ENCODE measurements at regions of chr2 and their contacts with region 1.

Region 1: DNA sequence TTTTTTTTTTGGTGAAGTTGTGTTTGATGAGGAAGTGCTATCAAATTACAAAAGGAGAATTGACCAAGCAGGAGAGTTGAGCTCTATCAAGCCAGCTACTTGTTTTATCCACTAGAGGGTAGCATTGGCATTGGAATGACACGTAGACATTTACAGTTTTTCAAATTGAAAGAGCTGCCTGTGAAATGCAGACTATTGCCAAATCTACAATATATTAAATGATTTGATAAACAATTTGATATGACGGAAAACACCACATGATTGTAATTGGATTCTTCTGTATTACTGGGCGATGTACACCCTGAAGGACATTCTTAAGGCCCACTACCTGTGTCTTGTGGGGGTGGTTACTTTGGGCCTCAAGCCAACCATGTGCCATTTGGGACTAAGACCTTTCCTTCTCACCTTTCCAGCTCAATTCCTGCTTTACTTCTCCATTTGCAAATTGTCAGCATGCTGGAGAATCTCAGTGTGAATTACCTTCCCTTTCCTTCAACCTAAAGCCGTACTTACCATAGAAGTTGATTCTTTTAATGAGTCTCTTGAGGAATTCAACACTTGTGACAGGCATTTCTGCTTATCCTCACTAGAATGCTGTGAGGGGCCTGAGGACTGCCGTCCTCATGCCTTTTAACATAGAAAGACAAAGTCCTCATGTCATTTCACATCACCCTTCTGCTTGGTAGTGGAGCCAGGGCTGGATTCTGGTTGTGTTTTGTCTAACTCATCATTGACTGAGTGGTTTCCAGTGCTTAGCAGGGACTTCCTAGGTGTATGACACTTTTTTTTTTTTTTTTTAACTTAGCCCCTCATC is 134.8 kb upstream of the THUMPD2 start:
- DNase-seq: peak in 1 of 2 donors; percentile 89
- H3K4me3 ChIP-seq: no peak overlapping the region
- H3K27ac ChIP-seq: no peak overlapping the region
- H3K4me1 ChIP-seq: peaks cover 0 to 7% (median 2%) of the 10 kb centered on the region in 4 donors
- H3K27me3 ChIP-seq: no peaks in the 10 kb centered on the region
- CTCF ChIP-seq: peak in 5 of 7 experiments; percentile 27 to 76 (median 63)
- EP300 ChIP-seq: no peak
- POLR2A ChIP-seq: no peak

Region 2: GRCh38 chr2:39455826-39456225 is 458.0 kb before region 1 on chr2:
- intact Hi-C with region 1: no loop called
- DNase-seq: no peak
- H3K4me3 ChIP-seq: no peak overlapping the region
- H3K27ac ChIP-seq: no peak overlapping the region
- H3K4me1 ChIP-seq: no peaks in the 10 kb centered on the region
- H3K27me3 ChIP-seq: no peaks in the 10 kb centered on the region
- CTCF ChIP-seq: no peak
- EP300 ChIP-seq: no peak
- POLR2A ChIP-seq: no peak

Region 3: DNA sequence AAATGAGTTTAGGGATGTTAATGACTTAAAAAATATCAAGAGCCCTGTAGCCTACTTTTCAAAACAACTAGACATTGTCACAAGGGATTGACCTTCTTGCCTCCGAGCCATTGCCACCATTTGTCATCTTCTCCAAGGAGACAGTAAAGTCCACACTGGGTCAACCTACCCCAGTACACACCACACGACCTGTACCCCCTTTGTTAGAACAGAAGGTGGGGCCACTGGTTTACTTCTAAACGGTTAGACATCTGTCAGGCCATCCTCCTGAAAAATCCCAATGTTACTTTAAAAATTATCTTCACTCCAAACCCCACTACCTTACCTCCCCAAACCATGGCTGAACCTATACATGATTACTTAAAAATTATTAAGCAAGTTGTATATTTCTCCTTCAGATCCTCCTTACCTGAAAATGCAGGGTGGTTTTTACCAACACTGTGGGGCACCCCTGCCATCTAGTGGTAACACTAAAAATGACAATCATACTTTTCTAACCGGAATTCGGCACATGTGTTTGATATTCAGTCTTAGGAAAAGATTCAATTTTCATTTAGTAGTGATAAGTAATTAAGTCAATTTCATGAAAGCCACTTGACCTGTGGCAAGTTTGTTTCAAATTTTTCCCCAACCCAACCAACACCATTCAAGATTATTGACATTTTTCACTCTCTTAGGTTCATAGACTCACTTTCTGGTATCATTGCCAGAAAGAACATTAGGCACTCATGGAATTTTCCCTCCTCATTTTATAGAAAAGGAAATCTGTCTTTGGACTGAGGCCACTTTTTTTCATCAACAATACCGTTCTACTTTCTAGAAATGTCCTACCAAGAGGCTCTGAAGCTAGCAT is 1868.7 kb after region 1 on chr2:
- intact Hi-C with region 1: loop called (anchors 5 kb)
- DNase-seq: peak in 1 of 2 donors; percentile 73
- H3K4me3 ChIP-seq: no peak overlapping the region
- H3K27ac ChIP-seq: no peak overlapping the region
- H3K4me1 ChIP-seq: peaks cover 0 to 5% (median 2%) of the 10 kb centered on the region in 4 donors
- H3K27me3 ChIP-seq: no peaks in the 10 kb centered on the region
- CTCF ChIP-seq: peak in 5 of 7 experiments; percentile 59 to 74 (median 68)
- EP300 ChIP-seq: no peak
- POLR2A ChIP-seq: no peak

Measured in stomach (tissue), 19 donors.